ENCODE measurements at regions of chr4 and their contacts with region 1.

Region 1: GRCh38 chr4:8607603-8608481 is 15.3 kb downstream of the CPZ start:
- DNase-seq: peak in 3 of 5 donors; percentile 52 to 75 (median 68)
- H3K4me3 ChIP-seq: no peak overlapping the region
- H3K27ac ChIP-seq: peak overlapping the region in 1 of 2 donors; percentile 10
- H3K4me1 ChIP-seq: no peaks in the 10 kb centered on the region
- H3K27me3 ChIP-seq: no peaks in the 10 kb centered on the region
- CTCF ChIP-seq: peak; percentile 71 to 88 (median 81)
- EP300 ChIP-seq: no peak
- POLR2A ChIP-seq: no peak

Region 2: DNA sequence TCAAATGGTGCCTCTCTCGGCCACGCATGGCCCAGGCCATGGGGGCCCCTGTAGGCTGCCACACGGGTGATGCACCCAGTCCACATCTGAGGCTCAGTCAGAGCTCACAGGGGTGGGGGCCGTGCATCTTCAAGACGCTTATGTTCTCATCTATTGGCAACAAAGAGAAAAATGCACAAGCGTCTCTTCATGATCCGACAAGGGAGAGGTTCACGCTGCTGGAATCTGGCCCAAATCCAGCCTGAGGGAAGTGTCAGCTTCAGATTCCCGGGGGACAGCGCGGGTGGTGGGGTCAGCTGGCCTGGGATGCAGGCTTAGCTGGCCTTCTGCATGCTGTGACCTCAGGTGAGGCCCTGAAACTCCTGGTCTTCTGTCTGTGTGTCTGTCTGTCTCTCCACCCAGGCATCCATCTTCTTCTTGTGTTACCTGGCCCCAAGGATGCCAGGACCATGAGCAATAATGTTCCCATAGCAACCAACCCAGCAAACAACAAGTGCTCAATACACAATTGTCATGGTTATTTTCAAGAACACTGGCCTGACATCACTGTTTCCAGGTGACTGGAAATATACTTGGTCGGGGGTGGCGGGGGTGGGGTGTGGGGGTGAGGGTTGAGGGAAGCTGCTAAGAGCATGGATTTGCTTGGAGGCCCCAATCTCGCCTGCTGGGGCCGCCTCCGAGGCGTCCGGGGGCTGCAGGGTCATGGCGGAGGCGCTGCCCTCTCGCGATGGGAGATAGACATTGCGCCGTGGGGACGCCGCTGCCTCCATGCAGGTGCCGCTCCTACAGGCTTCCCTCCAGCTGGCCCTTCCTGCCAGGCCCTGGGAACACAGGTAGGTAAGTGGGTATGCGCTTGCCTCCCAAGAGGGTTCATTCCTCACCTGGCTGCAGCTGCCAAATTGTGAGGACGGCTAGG is 497.5 kb before region 1 on chr4:
- intact Hi-C with region 1: no loop called
- DNase-seq: no peak
- H3K4me3 ChIP-seq: no peak overlapping the region
- H3K27ac ChIP-seq: no peak overlapping the region
- H3K4me1 ChIP-seq: no peaks in the 10 kb centered on the region
- H3K27me3 ChIP-seq: no peaks in the 10 kb centered on the region
- CTCF ChIP-seq: no peak
- EP300 ChIP-seq: no peak
- POLR2A ChIP-seq: no peak

Region 3: GRCh38 chr4:8241895-8242696 is 365.7 kb before region 1 on chr4:
- intact Hi-C with region 1: loop called in 2 of 4 experiments (anchors 5 to 10 kb)
- DNase-seq: peak; percentile 92 to 95 (median 93)
- H3K4me3 ChIP-seq: no peak overlapping the region
- H3K27ac ChIP-seq: peak overlapping the region in 1 of 2 donors; percentile 20
- H3K4me1 ChIP-seq: peaks cover 3% of the 10 kb centered on the region
- H3K27me3 ChIP-seq: no peaks in the 10 kb centered on the region
- CTCF ChIP-seq: peak; percentile 96 to 98 (median 97)
- EP300 ChIP-seq: no peak
- POLR2A ChIP-seq: no peak

Region 4: GRCh38 chr4:8451440-8452197 is 156.2 kb before region 1 on chr4:
- intact Hi-C with region 1: no loop called
- DNase-seq: no peak
- H3K4me3 ChIP-seq: no peak overlapping the region
- H3K27ac ChIP-seq: no peak overlapping the region
- H3K4me1 ChIP-seq: no peaks in the 10 kb centered on the region
- H3K27me3 ChIP-seq: no peaks in the 10 kb centered on the region
- CTCF ChIP-seq: no peak
- EP300 ChIP-seq: no peak
- POLR2A ChIP-seq: no peak

Region 5: GRCh38 chr4:8665406-8666360 is 57.8 kb after region 1 on chr4:
- intact Hi-C with region 1: no loop called
- DNase-seq: no peak
- H3K4me3 ChIP-seq: no peak overlapping the region
- H3K27ac ChIP-seq: no peak overlapping the region
- H3K4me1 ChIP-seq: no peaks in the 10 kb centered on the region
- H3K27me3 ChIP-seq: no peaks in the 10 kb centered on the region
- CTCF ChIP-seq: no peak
- EP300 ChIP-seq: no peak
- POLR2A ChIP-seq: no peak

Region 6: GRCh38 chr4:8886612-8887406 is 279.0 kb after region 1 on chr4:
- intact Hi-C with region 1: no loop called
- DNase-seq: no peak
- H3K4me3 ChIP-seq: no peak overlapping the region
- H3K27ac ChIP-seq: no peak overlapping the region
- H3K4me1 ChIP-seq: no peaks in the 10 kb centered on the region
- H3K27me3 ChIP-seq: no peaks in the 10 kb centered on the region
- CTCF ChIP-seq: no peak
- EP300 ChIP-seq: no peak
- POLR2A ChIP-seq: no peak